PC-3 (cell line): ENCODE measurements at regions of chrX and their contacts with region 1.

Region 1: GRCh38 chrX:10189317-10190268 is 32.8 kb downstream of the CLCN4 start:
- DNase-seq: peak; percentile 86
- ATAC-seq: peak; percentile 95
- H3K4me3 ChIP-seq: no peak overlapping the region
- H3K27ac ChIP-seq: peak overlapping the region; percentile 70
- H3K4me1 ChIP-seq: peaks cover 7% of the 10 kb centered on the region
- H3K27me3 ChIP-seq: no peaks in the 10 kb centered on the region
- CTCF ChIP-seq: peak; percentile 84

Region 2: GRCh38 chrX:10326578-10326977 is 137.0 kb after region 1 on chrX:
- CTCF ChIA-PET with region 1: no interaction called
- POLR2A ChIA-PET with region 1: no interaction called
- intact Hi-C with region 1: loop called (anchors 1 kb)
- DNase-seq: peak; percentile 52
- ATAC-seq: peak; percentile 77
- H3K4me3 ChIP-seq: no peak overlapping the region
- H3K27ac ChIP-seq: no peak overlapping the region
- H3K4me1 ChIP-seq: peaks cover 9% of the 10 kb centered on the region
- H3K27me3 ChIP-seq: no peaks in the 10 kb centered on the region
- CTCF ChIP-seq: peak; percentile 56

Region 3: GRCh38 chrX:10387011-10387410 is 197.4 kb after region 1 on chrX:
- CTCF ChIA-PET with region 1: no interaction called
- POLR2A ChIA-PET with region 1: no interaction called
- intact Hi-C with region 1: no loop called
- DNase-seq: peak; percentile 75
- ATAC-seq: peak; percentile 79
- H3K4me3 ChIP-seq: no peak overlapping the region
- H3K27ac ChIP-seq: peak overlapping the region; percentile 67
- H3K4me1 ChIP-seq: peaks cover 14% of the 10 kb centered on the region
- H3K27me3 ChIP-seq: no peaks in the 10 kb centered on the region
- CTCF ChIP-seq: no peak

Region 4: DNA sequence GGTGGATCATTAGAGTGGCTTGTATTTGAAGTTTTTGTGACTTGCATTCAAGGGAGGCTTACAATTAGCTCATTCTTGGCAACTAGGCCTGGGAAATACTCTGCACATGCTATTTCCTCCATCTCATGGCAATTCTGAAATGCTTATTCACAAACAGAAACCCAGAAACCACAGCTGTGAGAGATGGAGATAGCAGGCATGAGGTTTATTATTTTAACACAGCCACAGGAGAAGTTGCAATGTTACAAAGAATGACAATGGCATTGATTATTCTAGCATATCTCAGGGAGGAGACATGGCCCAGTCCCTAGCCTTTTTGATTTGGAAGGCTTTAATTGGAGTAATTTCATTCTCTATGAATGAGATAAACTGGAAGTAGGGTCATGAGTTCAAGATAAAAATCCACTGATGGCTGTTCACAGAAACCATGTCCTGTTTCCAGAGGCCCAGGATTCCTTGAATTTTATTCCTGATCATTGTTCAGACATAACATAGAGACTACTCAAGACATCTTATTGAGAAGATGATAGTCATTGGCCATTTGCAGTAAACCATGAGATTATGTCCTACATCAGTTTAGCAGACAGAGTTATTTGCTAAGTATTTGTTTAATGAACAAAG is 306.9 kb after region 1 on chrX:
- CTCF ChIA-PET with region 1: no interaction called
- POLR2A ChIA-PET with region 1: no interaction called
- intact Hi-C with region 1: no loop called
- DNase-seq: no peak
- ATAC-seq: no peak
- H3K4me3 ChIP-seq: no peak overlapping the region
- H3K27ac ChIP-seq: no peak overlapping the region
- H3K4me1 ChIP-seq: no peaks in the 10 kb centered on the region
- H3K27me3 ChIP-seq: no peaks in the 10 kb centered on the region
- CTCF ChIP-seq: no peak

Region 5: DNA sequence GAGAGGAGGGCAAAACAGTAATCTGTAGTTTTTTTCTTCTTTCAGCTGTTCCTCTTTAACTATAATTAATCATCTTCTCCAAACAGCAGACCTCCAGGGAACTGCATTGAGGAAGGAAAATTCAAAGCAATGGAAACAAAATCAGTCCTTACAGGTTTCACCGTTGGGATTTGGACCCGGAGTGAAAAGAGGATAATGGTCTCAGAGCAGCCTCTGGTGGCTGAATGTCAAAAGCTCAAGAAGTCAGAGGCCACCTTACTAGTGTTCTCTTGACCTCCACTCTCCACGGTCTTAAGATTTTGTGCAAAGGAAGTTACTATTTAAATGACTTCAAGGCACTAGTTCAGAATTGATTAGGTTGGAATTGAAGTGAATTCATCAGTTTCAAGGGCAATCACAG is 446.7 kb after region 1 on chrX:
- CTCF ChIA-PET with region 1: interaction called, 8 read pairs
- POLR2A ChIA-PET with region 1: no interaction called
- intact Hi-C with region 1: loop called (anchors 1 kb)
- DNase-seq: peak; percentile 80
- ATAC-seq: peak; percentile 25
- H3K4me3 ChIP-seq: peak overlapping the region; percentile 51; the same call in 1 of the 2 replicates
- H3K27ac ChIP-seq: peak overlapping the region; percentile 97; the same call in 1 of the 2 replicates
- H3K4me1 ChIP-seq: peaks cover 44% of the 10 kb centered on the region
- H3K27me3 ChIP-seq: no peaks in the 10 kb centered on the region
- CTCF ChIP-seq: peak; percentile 82

Region 6: DNA sequence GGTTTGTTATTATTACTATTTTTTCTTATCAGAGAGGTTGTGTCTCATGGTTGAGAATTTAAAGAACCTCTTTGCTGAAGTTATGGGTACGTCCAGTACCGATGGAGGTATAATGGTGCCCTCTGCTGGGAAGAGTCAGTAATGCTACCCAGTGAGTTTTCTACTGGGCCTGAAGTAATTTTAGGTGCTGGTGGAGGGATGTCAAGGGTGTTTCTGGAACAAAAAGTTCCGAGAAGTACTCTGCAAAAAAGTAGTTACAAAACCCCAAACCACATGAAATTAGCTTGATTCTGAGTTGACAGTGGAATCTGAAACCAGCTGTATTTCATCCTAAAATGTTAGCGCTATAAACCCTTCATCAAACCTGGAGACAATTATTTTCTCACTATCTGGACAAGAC is 533.3 kb after region 1 on chrX:
- CTCF ChIA-PET with region 1: no interaction called
- POLR2A ChIA-PET with region 1: no interaction called
- intact Hi-C with region 1: loop called (anchors 1 kb)
- DNase-seq: peak; percentile 78
- ATAC-seq: peak; percentile 64
- H3K4me3 ChIP-seq: no peak overlapping the region
- H3K27ac ChIP-seq: no peak overlapping the region
- H3K4me1 ChIP-seq: no peaks in the 10 kb centered on the region
- H3K27me3 ChIP-seq: no peaks in the 10 kb centered on the region
- CTCF ChIP-seq: peak; percentile 78

Region 7: GRCh38 chrX:11137543-11138139 is 948.0 kb after region 1 on chrX:
- CTCF ChIA-PET with region 1: no interaction called
- POLR2A ChIA-PET with region 1: no interaction called
- intact Hi-C with region 1: loop called (anchors 1 kb)
- DNase-seq: peak; percentile 73
- ATAC-seq: no peak
- H3K4me3 ChIP-seq: no peak overlapping the region
- H3K27ac ChIP-seq: no peak overlapping the region
- H3K4me1 ChIP-seq: no peaks in the 10 kb centered on the region
- H3K27me3 ChIP-seq: no peaks in the 10 kb centered on the region
- CTCF ChIP-seq: peak; percentile 67